ENCODE measurements at regions of chr2 and their contacts with region 1.

Region 1: DNA sequence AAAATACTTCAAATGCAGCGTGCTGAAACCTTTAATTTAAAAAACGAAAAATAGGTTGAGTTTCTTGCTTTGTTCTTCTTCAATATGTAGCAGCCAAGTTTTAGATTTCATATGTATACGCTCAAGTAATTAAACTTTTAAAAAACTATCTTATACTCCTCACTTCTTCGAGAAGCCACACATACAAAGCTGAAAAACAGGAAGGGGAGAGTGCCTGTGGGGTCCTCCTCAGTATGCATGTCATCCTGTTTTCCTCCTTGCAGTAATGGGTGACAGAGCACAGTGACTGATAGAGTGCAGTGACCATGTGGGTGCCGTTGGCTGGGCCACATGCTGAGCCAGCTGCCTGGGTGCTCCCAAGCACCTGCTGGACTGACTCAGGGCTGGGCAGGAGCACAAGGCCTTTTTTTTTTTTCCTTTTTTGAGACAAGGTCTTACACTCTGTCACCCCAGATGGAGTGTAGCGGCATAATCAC is 33.3 kb downstream of the UXS1 start:
- DNase-seq: peak; percentile 74
- ATAC-seq: peak; percentile 73
- H3K4me3 Mint-ChIP-seq: peak overlapping the region; percentile 80
- H3K27ac Mint-ChIP-seq: peak overlapping the region; percentile 98
- H3K4me1 Mint-ChIP-seq: peaks cover 85% of the 10 kb centered on the region
- H3K27me3 Mint-ChIP-seq: no peaks in the 10 kb centered on the region
- CTCF ChIP-seq: no peak

Region 2: GRCh38 chr2:106137731-106138521 is 22.9 kb before region 1 on chr2:
- CTCF ChIA-PET with region 1: interaction called, 4 read pairs
- POLR2A ChIA-PET with region 1: interaction called, 16 read pairs
- intact Hi-C with region 1: no loop called
- DNase-seq: peak; percentile 28
- ATAC-seq: peak; percentile 46
- H3K4me3 Mint-ChIP-seq: peak overlapping the region; percentile 70
- H3K27ac Mint-ChIP-seq: peak overlapping the region; percentile 90
- H3K4me1 Mint-ChIP-seq: peaks cover 45% of the 10 kb centered on the region
- H3K27me3 Mint-ChIP-seq: no peaks in the 10 kb centered on the region
- CTCF ChIP-seq: no peak

Region 3: GRCh38 chr2:106147159-106147558 is 13.7 kb before region 1 on chr2:
- CTCF ChIA-PET with region 1: interaction called, 16 read pairs
- POLR2A ChIA-PET with region 1: interaction called, 15 read pairs
- intact Hi-C with region 1: no loop called
- DNase-seq: no peak
- ATAC-seq: no peak
- H3K4me3 Mint-ChIP-seq: no peak overlapping the region
- H3K27ac Mint-ChIP-seq: peak overlapping the region; percentile 87
- H3K4me1 Mint-ChIP-seq: peaks cover 59% of the 10 kb centered on the region
- H3K27me3 Mint-ChIP-seq: no peaks in the 10 kb centered on the region
- CTCF ChIP-seq: no peak

Region 4: DNA sequence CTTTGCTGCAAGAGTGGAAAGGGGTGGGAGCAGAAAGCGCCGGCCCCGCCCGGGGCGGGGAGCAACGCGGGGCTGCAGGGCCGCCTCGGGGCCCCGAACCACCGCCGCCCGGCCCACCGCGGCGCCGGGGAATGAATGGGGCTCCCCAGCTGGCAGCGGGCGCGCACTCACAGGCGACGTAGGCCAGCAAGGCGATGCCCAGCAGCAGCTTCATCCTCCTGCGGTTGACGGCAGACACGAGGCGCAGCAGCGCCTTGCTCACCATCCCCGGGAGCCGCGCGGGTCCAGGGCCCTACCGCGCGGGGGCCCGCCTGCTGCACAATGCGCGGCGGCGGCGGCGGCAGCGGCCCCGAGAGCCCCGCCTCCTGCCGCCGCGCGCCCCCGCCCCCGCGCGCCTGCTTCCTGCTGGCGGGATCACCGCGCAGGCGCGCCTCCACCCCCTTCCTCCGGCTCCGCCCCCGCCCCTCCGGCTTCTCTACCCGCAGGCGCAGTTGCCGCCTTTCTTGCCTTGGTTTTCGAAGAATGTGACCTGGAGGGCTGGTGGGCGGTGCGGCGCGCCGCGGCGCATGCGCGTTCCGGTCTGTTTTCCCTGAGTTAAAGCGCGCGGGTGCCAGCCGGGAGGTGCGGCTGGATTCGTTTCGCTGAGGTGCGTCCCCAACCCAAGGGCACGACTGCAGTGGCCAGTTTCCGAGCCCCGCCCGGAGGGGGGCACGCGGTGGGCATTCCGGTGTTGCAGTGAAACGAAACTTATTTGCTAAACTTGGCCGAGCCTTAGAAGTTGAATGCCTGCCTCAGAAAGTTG is 33.4 kb after region 1 on chr2 and contains the start of gene UXS1:
- CTCF ChIA-PET with region 1: interaction called, 7 read pairs
- POLR2A ChIA-PET with region 1: interaction called, 25 read pairs
- intact Hi-C with region 1: loop called (anchors 2 kb)
- DNase-seq: peak; percentile 98
- ATAC-seq: peak; percentile 78
- H3K4me3 Mint-ChIP-seq: peak within 1 kb of the TSS; percentile 85
- H3K27ac Mint-ChIP-seq: peak within 1 kb of the TSS; percentile 87
- H3K4me1 Mint-ChIP-seq: peaks cover 41% of the 10 kb centered on the region
- H3K27me3 Mint-ChIP-seq: no peaks in the 10 kb centered on the region
- CTCF ChIP-seq: no peak
- total RNA-seq, gene UXS1: 47.4 to 47.8 TPM

Region 5: DNA sequence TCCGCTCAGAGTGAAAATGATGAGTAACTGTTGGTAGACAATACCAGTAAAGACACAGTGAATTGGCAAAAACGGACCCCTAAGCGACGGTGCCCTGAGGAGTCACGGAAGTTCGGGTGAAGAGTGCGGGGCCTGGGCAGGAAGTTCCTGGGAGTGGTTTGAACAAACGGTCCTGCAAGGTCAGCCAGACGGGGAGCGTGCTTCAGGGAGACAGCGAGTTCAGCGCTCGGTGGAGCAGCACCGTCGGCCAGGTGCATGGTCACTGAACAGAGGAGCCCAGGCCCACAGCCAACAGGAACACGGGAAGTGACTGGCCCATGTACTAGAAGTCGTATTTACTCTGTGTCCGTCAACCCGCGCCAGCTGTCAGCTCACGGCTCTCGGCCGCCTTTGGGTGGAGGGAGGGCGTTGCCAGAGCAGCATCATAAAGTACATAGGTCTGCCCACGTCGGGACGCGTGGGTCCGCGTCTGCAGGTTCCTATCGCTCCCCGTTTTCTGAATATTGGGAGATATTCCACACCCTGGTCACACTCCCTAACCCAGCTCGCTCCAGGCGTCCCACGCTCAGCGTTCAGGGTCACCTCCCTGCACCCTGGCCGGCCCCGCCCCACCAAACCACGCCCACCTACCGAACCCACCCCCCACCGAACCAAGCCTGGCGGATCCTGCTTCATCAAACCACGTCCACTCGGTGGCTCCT is 108.9 kb after region 1 on chr2:
- CTCF ChIA-PET with region 1: no interaction called
- POLR2A ChIA-PET with region 1: no interaction called
- intact Hi-C with region 1: no loop called
- DNase-seq: peak; percentile 61
- ATAC-seq: peak; percentile 76
- H3K4me3 Mint-ChIP-seq: peak overlapping the region; percentile 71
- H3K27ac Mint-ChIP-seq: no peak overlapping the region
- H3K4me1 Mint-ChIP-seq: peaks cover 20% of the 10 kb centered on the region
- H3K27me3 Mint-ChIP-seq: peaks cover 8% of the 10 kb centered on the region
- CTCF ChIP-seq: no peak

Measured in activated CD8-positive, alpha-beta T cell treated with anti-CD3 and anti-CD28 coated beads for 36 hours (primary cell).